ENCODE measurements at regions of chr17 and their contacts with region 1.

Region 1: GRCh38 chr17:41918314-41919164 is at the start of gene ACLY:
- DNase-seq: peak; percentile 90
- H3K4me3 ChIP-seq: peak within 1 kb of the TSS; percentile 98
- H3K27ac ChIP-seq: peak within 1 kb of the TSS; percentile 61
- H3K27me3 ChIP-seq: no peaks in the 10 kb centered on the region
- CTCF ChIP-seq: no peak
- polyA plus RNA-seq, gene ACLY: 161 and 163 TPM in 2 replicates

Region 2: GRCh38 chr17:41864836-41865595 is 53.5 kb before region 1 on chr17 and contains the start of gene KLHL11:
- CTCF ChIA-PET with region 1: no interaction called
- POLR2A ChIA-PET with region 1: interaction called, 12 read pairs
- DNase-seq: peak; percentile 45
- H3K4me3 ChIP-seq: peak within 1 kb of the TSS; percentile 94
- H3K27ac ChIP-seq: peak within 1 kb of the TSS; percentile 75
- H3K27me3 ChIP-seq: no peaks in the 10 kb centered on the region
- CTCF ChIP-seq: no peak
- polyA plus RNA-seq, gene KLHL11: 7.6 and 9.3 TPM in 2 replicates

Region 3: DNA sequence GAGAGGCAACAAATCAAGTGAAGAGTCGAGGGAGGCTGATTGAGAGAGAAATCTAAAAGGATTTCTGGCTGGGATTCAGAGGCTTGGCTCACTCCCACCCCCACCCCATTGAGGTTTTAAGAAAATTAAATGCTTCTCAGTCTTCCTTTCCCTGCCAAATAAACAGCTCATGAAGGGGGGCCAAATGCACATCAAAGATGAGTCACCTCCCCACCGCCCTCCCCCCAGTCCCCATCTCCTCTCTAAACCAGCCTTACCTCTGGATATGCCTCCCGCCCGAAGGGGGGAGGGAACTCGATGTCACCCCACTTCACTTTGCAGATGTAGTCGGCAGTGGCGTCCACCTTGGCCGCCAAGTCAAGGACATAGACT is 11.4 kb before region 1 on chr17:
- CTCF ChIA-PET with region 1: no interaction called
- POLR2A ChIA-PET with region 1: interaction called, 18 read pairs
- DNase-seq: no peak
- H3K4me3 ChIP-seq: no peak overlapping the region
- H3K27ac ChIP-seq: peak overlapping the region; percentile 65
- H3K27me3 ChIP-seq: no peaks in the 10 kb centered on the region
- CTCF ChIP-seq: no peak

Region 4: GRCh38 chr17:41930009-41930832 is 11.7 kb after region 1 on chr17 and contains the start of gene ODAD4:
- CTCF ChIA-PET with region 1: interaction called, 3 read pairs
- POLR2A ChIA-PET with region 1: interaction called, 23 read pairs
- DNase-seq: peak; percentile 94
- H3K4me3 ChIP-seq: peak within 1 kb of the TSS; percentile 72
- H3K27ac ChIP-seq: peak within 1 kb of the TSS; percentile 83
- H3K27me3 ChIP-seq: no peaks in the 10 kb centered on the region
- CTCF ChIP-seq: peak; percentile 60
- polyA plus RNA-seq, gene ODAD4: 0.47 and 0.56 TPM in 2 replicates

Measured in AG04450 (cell line).